Calu3 (cell line): ENCODE measurements at regions of chr3 and their contacts with region 1.

Region 1: DNA sequence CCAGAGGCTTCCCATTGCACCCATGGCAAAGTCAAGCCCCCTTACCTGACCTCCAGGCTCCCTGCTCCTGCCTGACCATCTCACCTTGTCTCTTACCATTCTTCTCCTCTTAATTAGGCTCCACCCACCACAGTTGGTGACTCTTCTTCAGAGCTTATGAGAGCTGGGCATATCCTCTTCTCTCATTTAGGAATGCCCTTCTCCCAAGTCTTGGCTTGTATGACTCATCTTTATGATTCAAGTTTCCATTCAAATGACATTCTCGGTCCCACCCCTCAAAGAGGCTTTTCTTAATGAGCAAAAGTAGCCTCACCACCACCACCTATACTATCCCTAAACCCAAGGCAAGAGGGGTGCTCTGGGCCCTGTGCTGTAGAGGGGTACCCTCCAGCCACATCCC is 55.3 kb upstream of the NUDT16 start:
- DNase-seq: no peak
- H3K4me3 Mint-ChIP-seq: no peak overlapping the region
- H3K27ac Mint-ChIP-seq: no peak overlapping the region
- H3K4me1 Mint-ChIP-seq: no peaks in the 10 kb centered on the region
- H3K27me3 Mint-ChIP-seq: no peaks in the 10 kb centered on the region
- CTCF ChIP-seq: no peak

Region 2: GRCh38 chr3:131304890-131305289 is 21.4 kb before region 1 on chr3:
- CTCF ChIA-PET with region 1: interaction called, 12 read pairs
- intact Hi-C with region 1: no loop called
- DNase-seq: no peak
- H3K4me3 Mint-ChIP-seq: no peak overlapping the region
- H3K27ac Mint-ChIP-seq: no peak overlapping the region
- H3K4me1 Mint-ChIP-seq: no peaks in the 10 kb centered on the region
- H3K27me3 Mint-ChIP-seq: no peaks in the 10 kb centered on the region
- CTCF ChIP-seq: no peak

Region 3: GRCh38 chr3:131620977-131621376 is 294.7 kb after region 1 on chr3:
- CTCF ChIA-PET with region 1: no interaction called
- intact Hi-C with region 1: no loop called
- DNase-seq: no peak
- H3K4me3 Mint-ChIP-seq: no peak overlapping the region
- H3K27ac Mint-ChIP-seq: no peak overlapping the region
- H3K4me1 Mint-ChIP-seq: no peaks in the 10 kb centered on the region
- H3K27me3 Mint-ChIP-seq: no peaks in the 10 kb centered on the region
- CTCF ChIP-seq: no peak

Region 4: GRCh38 chr3:131772269-131773026 is 446.1 kb after region 1 on chr3:
- CTCF ChIA-PET with region 1: no interaction called
- intact Hi-C with region 1: no loop called
- DNase-seq: no peak
- H3K4me3 Mint-ChIP-seq: no peak overlapping the region
- H3K27ac Mint-ChIP-seq: no peak overlapping the region
- H3K4me1 Mint-ChIP-seq: no peaks in the 10 kb centered on the region
- H3K27me3 Mint-ChIP-seq: no peaks in the 10 kb centered on the region
- CTCF ChIP-seq: no peak